CD8-positive, alpha-beta T cell (primary cell): ENCODE measurements at regions of chr4 and their contacts with region 1.

Region 1: GRCh38 chr4:40897557-40898203 is 147.9 kb downstream of the NSUN7 start:
- DNase-seq: peak; percentile 9 to 70 (median 62)
- ATAC-seq: peak; percentile 55
- H3K4me3 ChIP-seq: no peak overlapping the region
- H3K4me3 Mint-ChIP-seq: peak overlapping the region; percentile 76
- H3K27ac ChIP-seq: no peak overlapping the region
- H3K27ac Mint-ChIP-seq: no peak overlapping the region
- H3K4me1 ChIP-seq: no peaks in the 10 kb centered on the region
- H3K4me1 Mint-ChIP-seq: peaks cover 2% of the 10 kb centered on the region
- H3K27me3 ChIP-seq: no peaks in the 10 kb centered on the region
- H3K27me3 Mint-ChIP-seq: peaks cover 2% of the 10 kb centered on the region
- CTCF ChIP-seq: peak; percentile 78

Region 2: GRCh38 chr4:40736910-40737309 is 160.8 kb before region 1 on chr4:
- CTCF ChIA-PET with region 1: interaction called, 3 read pairs
- POLR2A ChIA-PET with region 1: no interaction called
- intact Hi-C with region 1: loop called in 1 of 2 experiments (anchors 5 kb)
- DNase-seq: peak in 1 of 9 experiments; percentile 25
- ATAC-seq: no peak
- H3K4me3 ChIP-seq: no peak overlapping the region
- H3K4me3 Mint-ChIP-seq: no peak overlapping the region
- H3K27ac ChIP-seq: no peak overlapping the region
- H3K27ac Mint-ChIP-seq: no peak overlapping the region
- H3K4me1 ChIP-seq: peaks cover 2% of the 10 kb centered on the region
- H3K4me1 Mint-ChIP-seq: peaks cover 2% of the 10 kb centered on the region
- H3K27me3 ChIP-seq: no peaks in the 10 kb centered on the region
- H3K27me3 Mint-ChIP-seq: peaks cover 7% of the 10 kb centered on the region
- CTCF ChIP-seq: no peak

Region 3: GRCh38 chr4:40881851-40882250 is 15.8 kb before region 1 on chr4:
- CTCF ChIA-PET with region 1: interaction called, 12 read pairs
- POLR2A ChIA-PET with region 1: no interaction called
- intact Hi-C with region 1: no loop called
- DNase-seq: no peak
- ATAC-seq: no peak
- H3K4me3 ChIP-seq: no peak overlapping the region
- H3K4me3 Mint-ChIP-seq: no peak overlapping the region
- H3K27ac ChIP-seq: no peak overlapping the region
- H3K27ac Mint-ChIP-seq: no peak overlapping the region
- H3K4me1 ChIP-seq: no peaks in the 10 kb centered on the region
- H3K4me1 Mint-ChIP-seq: no peaks in the 10 kb centered on the region
- H3K27me3 ChIP-seq: no peaks in the 10 kb centered on the region
- H3K27me3 Mint-ChIP-seq: peaks cover 20% of the 10 kb centered on the region
- CTCF ChIP-seq: no peak

Region 4: GRCh38 chr4:40887288-40888131 is 10.2 kb before region 1 on chr4:
- CTCF ChIA-PET with region 1: interaction called, 14 read pairs
- POLR2A ChIA-PET with region 1: no interaction called
- intact Hi-C with region 1: no loop called
- DNase-seq: no peak
- ATAC-seq: no peak
- H3K4me3 ChIP-seq: no peak overlapping the region
- H3K4me3 Mint-ChIP-seq: no peak overlapping the region
- H3K27ac ChIP-seq: no peak overlapping the region
- H3K27ac Mint-ChIP-seq: no peak overlapping the region
- H3K4me1 ChIP-seq: no peaks in the 10 kb centered on the region
- H3K4me1 Mint-ChIP-seq: no peaks in the 10 kb centered on the region
- H3K27me3 ChIP-seq: no peaks in the 10 kb centered on the region
- H3K27me3 Mint-ChIP-seq: peaks cover 3% of the 10 kb centered on the region
- CTCF ChIP-seq: no peak

Region 5: DNA sequence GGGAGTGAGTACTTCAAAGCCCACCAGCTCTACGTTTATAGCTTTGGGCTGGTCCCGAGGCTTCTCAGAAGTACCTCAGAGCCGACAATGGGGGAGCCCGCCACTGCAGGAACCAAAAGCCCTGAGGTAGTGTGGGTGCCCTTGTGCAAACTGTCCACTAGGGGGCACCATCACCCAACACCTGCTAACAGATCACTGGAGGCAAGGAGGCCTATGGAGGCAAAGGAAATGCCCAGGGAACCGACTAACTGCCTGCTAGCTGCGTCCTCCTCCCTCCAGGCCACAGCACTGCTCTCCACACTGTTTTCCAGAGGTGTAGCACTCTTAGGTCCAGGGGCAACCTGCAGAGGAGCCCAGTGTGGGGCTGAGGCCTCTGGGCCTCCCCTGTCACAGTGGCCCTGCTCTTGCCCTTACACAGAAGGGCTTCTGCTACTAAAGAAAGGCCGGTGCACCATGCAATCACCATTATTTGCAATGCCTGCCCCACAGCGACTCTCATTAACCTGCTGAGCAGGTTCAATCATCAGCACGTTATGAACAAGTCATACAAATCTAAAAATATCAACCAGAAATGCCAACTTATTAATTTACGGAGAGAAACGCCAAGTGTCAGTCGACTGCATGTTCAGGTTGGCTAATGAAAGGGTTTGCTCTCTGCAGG is 11.2 kb after region 1 on chr4:
- CTCF ChIA-PET with region 1: interaction called, 22 read pairs
- POLR2A ChIA-PET with region 1: no interaction called
- intact Hi-C with region 1: no loop called
- DNase-seq: peak; percentile 16 to 69 (median 46)
- ATAC-seq: peak; percentile 69
- H3K4me3 ChIP-seq: no peak overlapping the region
- H3K4me3 Mint-ChIP-seq: no peak overlapping the region
- H3K27ac ChIP-seq: no peak overlapping the region
- H3K27ac Mint-ChIP-seq: no peak overlapping the region
- H3K4me1 ChIP-seq: no peaks in the 10 kb centered on the region
- H3K4me1 Mint-ChIP-seq: peaks cover 11% of the 10 kb centered on the region
- H3K27me3 ChIP-seq: no peaks in the 10 kb centered on the region
- H3K27me3 Mint-ChIP-seq: no peaks in the 10 kb centered on the region
- CTCF ChIP-seq: peak; percentile 71